Activated T-helper 1 cell treated with anti-CD3 and anti-CD28 coated beads, Interleukin-12 subunit alpha, Interleukin-12 subunit beta, Interleukin-2, Interleukin-4 antibody, amounts not matched to agents 30 ng/mL and 10 ng/mL and 1 ng/mL, durations not matched to agents 14 hours and 24 hours and 36 hours (primary cell): ENCODE measurements at regions of chr10 and their contacts with region 1.

Region 1: DNA sequence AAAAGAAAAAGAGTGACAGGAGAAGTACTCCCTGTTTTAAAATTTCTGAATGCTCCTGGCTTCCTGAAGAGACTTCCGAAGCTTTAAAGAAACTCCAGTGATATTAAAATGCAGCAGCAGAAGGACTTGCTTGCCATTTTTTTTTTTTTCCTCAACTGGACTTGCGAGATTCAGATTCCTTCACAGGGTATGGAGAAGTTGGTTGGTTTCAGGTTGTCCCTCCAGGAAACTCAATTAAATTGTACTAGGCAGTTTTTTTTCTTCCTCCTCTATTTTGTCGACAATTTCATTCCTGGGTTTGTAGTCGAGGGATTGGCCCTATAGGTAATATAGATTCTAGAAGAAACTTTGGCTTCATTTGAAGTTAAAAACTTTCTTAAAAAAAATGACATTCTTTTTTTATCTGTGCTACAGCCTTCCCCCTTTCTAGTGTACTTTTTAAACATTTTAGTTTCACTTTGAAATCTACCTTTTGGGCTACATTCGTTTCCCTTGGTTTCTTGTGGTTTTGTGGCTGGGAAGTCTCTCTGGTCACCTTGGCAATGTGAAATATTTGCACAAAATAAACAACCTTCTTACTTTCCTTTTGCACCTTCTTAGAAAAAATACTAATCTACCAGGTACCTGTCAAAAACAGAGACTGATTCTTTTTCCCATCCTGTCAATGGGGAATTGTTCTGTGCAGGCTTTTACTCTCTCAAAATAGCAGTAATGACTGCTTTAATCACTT is 350.1 kb downstream of the GATA3 start:
- DNase-seq: peak; percentile 68
- H3K4me3 Mint-ChIP-seq: peak overlapping the region; percentile 57
- H3K27ac Mint-ChIP-seq: peak overlapping the region; percentile 89
- H3K4me1 Mint-ChIP-seq: peaks cover 68% of the 10 kb centered on the region
- H3K27me3 Mint-ChIP-seq: peaks cover 10% of the 10 kb centered on the region

Region 2: GRCh38 chr10:8138471-8138870 is 266.1 kb before region 1 on chr10:
- intact Hi-C with region 1: loop called (anchors 1 kb)
- DNase-seq: no peak
- H3K4me3 Mint-ChIP-seq: peak overlapping the region; percentile 15
- H3K27ac Mint-ChIP-seq: peak overlapping the region; percentile 56
- H3K4me1 Mint-ChIP-seq: peaks cover 57% of the 10 kb centered on the region
- H3K27me3 Mint-ChIP-seq: no peaks in the 10 kb centered on the region

Region 3: GRCh38 chr10:8312781-8313180 is 91.8 kb before region 1 on chr10:
- intact Hi-C with region 1: loop called (anchors 1 kb)
- DNase-seq: no peak
- H3K4me3 Mint-ChIP-seq: no peak overlapping the region
- H3K27ac Mint-ChIP-seq: peak overlapping the region; percentile 67
- H3K4me1 Mint-ChIP-seq: peaks cover 53% of the 10 kb centered on the region
- H3K27me3 Mint-ChIP-seq: no peaks in the 10 kb centered on the region

Region 4: GRCh38 chr10:8338177-8338766 is 66.3 kb before region 1 on chr10:
- intact Hi-C with region 1: loop called (anchors 1 kb)
- DNase-seq: no peak
- H3K4me3 Mint-ChIP-seq: no peak overlapping the region
- H3K27ac Mint-ChIP-seq: peak overlapping the region; percentile 90
- H3K4me1 Mint-ChIP-seq: peaks cover 25% of the 10 kb centered on the region
- H3K27me3 Mint-ChIP-seq: peaks cover 19% of the 10 kb centered on the region

Region 5: GRCh38 chr10:8577686-8578085 is 173.1 kb after region 1 on chr10:
- intact Hi-C with region 1: loop called (anchors 5 kb)
- DNase-seq: no peak
- H3K4me3 Mint-ChIP-seq: peak overlapping the region; percentile 27
- H3K27ac Mint-ChIP-seq: peak overlapping the region; percentile 64
- H3K4me1 Mint-ChIP-seq: peaks cover 40% of the 10 kb centered on the region
- H3K27me3 Mint-ChIP-seq: peaks cover 3% of the 10 kb centered on the region

Region 6: DNA sequence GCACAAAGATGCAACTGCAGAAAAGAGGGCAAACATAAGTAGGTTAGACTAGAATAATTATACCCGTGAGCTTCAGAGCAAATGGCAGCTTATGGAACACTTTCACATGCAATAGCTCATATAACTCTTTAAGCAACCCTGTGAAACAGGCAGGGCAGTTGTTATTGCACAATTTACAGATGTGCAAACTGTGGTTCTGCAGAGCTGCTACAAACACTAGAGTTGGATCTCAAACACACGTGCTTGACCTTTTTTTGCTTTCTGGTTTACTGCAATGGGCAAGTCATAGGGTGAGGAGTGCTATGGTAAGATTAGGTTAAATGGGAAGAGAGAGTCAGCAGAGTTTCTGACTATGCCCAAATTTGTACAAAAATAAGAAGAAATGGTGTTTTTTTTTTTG is 260.8 kb after region 1 on chr10:
- intact Hi-C with region 1: no loop called
- DNase-seq: no peak
- H3K4me3 Mint-ChIP-seq: no peak overlapping the region
- H3K27ac Mint-ChIP-seq: no peak overlapping the region
- H3K4me1 Mint-ChIP-seq: no peaks in the 10 kb centered on the region
- H3K27me3 Mint-ChIP-seq: no peaks in the 10 kb centered on the region